Head of caudate nucleus (tissue), 42 donors: ENCODE measurements at regions of chr7 and their contacts with region 1.

Region 1: DNA sequence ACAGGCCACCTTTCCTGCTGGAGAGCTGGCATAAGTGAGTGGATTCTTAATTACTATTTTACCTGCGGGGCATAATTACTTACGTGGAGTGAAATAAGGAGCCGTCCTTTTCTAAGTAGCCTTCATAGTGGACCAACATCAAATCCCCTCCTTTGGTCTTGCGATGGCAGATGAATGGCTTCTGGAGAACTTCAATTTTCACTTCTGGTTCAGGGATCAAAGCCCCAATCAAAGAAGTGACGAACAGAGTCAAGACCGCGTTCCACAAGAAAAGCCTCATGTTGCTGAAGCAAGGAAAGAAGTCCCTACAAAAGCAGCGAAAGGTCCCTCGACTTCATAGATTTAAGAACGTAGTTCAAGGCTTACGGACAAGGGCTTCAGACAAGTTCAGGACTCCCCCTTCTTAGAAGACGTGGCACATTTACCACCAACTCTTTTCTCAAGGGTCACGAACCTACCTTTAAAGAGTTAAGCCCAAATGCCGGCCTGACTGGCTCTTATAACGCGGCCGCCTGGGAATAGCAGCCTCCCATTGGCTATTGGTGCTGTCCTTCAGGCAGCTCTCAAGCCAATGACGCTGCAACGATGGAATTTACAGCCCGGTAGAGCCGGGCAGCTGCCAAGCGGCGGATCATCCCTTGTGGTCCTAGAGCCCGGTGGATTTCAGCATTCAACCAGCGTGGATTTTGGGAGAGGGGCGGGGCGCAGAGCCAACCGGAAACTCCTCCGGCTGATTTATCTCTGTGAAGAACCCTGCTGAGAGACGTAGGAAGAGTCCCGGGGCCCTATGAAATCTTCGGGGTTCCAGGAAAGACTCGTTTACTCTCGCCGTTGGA is at the start of gene FKBP14:
- DNase-seq: peak; percentile 91 to 99 (median 97)

Region 2: GRCh38 chr7:29988424-29989256 is 37.8 kb before region 1 on chr7:
- intact Hi-C with region 1: loop called (anchors 5 kb)
- DNase-seq: peak in 40 of 42 donors; percentile 44 to 78 (median 63)

Region 3: GRCh38 chr7:30134611-30135545 is 108.4 kb after region 1 on chr7 and contains the start of gene MTURN:
- intact Hi-C with region 1: loop called (anchors 10 kb)
- DNase-seq: peak; percentile 87 to 97 (median 93)